ENCODE measurements at regions of chr12 and their contacts with region 1.

Region 1: GRCh38 chr12:14167005-14167628 is 185.7 kb upstream of the GRIN2B start:
- DNase-seq: peak; percentile 59
- H3K4me3 Mint-ChIP-seq: no peak overlapping the region
- H3K27ac Mint-ChIP-seq: no peak overlapping the region
- H3K4me1 Mint-ChIP-seq: no peaks in the 10 kb centered on the region
- H3K27me3 Mint-ChIP-seq: peaks cover 4% of the 10 kb centered on the region

Region 2: GRCh38 chr12:13278249-13278787 is 888.8 kb before region 1 on chr12:
- CTCF ChIA-PET with region 1: interaction called, 6 read pairs
- intact Hi-C with region 1: loop called (anchors 2 kb)
- DNase-seq: peak; percentile 67
- H3K4me3 Mint-ChIP-seq: no peak overlapping the region
- H3K27ac Mint-ChIP-seq: no peak overlapping the region
- H3K4me1 Mint-ChIP-seq: peaks cover 3% of the 10 kb centered on the region
- H3K27me3 Mint-ChIP-seq: peaks cover 27% of the 10 kb centered on the region

Region 3: DNA sequence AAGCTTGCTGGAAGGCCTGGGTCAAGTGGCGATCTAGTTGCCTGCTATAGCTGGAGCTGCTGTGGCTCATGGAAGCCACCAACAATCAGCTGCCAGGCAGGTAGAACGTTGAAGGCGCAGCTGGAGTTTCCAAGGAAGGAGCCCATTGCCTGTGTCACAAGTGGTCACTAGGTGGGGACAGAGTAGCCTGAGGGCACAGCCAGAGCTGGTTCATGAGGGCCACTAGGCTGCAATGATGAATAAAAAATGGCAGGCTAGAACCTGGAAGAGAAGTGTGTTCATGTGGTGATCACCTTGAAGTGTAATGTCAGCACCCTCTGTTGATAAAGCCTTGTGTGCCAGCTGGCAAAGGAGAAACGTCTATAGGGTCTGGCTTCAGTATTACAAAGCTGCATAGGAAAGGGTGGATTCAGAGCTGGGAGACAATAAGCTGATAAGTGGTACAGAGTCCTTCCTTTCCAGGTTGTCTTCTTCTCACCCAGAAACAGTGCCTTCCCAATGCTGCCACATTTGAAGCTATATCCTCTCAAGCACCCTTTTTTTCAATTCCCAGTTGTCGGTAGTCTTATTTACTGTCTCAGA is 804.8 kb before region 1 on chr12:
- CTCF ChIA-PET with region 1: interaction called, 6 read pairs
- intact Hi-C with region 1: loop called (anchors 1 kb)
- DNase-seq: peak; percentile 75
- H3K4me3 Mint-ChIP-seq: no peak overlapping the region
- H3K27ac Mint-ChIP-seq: no peak overlapping the region
- H3K4me1 Mint-ChIP-seq: no peaks in the 10 kb centered on the region
- H3K27me3 Mint-ChIP-seq: peaks cover 15% of the 10 kb centered on the region

Region 4: GRCh38 chr12:13436696-13437391 is 730.3 kb before region 1 on chr12:
- CTCF ChIA-PET with region 1: no interaction called
- intact Hi-C with region 1: no loop called
- DNase-seq: no peak
- H3K4me3 Mint-ChIP-seq: no peak overlapping the region
- H3K27ac Mint-ChIP-seq: no peak overlapping the region
- H3K4me1 Mint-ChIP-seq: no peaks in the 10 kb centered on the region
- H3K27me3 Mint-ChIP-seq: no peaks in the 10 kb centered on the region

Region 5: DNA sequence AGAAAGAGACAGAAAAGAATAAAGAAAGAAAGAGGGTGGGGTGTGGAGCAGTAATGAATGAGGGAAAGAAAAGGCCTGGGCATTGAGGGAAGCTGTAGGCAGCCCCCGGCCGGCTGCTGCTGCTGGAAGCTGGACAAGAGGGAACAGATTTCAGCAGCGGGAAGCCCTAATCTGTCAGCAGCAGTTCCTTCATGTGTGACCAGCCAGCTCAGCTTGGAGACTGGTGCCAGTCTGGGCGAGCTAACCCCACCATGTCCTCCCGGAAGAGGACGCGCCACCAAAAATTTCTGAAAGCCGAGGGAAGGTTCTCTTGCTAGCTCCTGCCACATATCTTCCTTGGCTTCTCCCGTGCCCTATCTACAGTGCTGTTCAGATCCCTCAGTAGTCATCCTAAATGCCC is 422.6 kb before region 1 on chr12:
- CTCF ChIA-PET with region 1: interaction called, 4 read pairs
- intact Hi-C with region 1: loop called (anchors 2 kb)
- DNase-seq: no peak
- H3K4me3 Mint-ChIP-seq: no peak overlapping the region
- H3K27ac Mint-ChIP-seq: no peak overlapping the region
- H3K4me1 Mint-ChIP-seq: peaks cover 3% of the 10 kb centered on the region
- H3K27me3 Mint-ChIP-seq: peaks cover 19% of the 10 kb centered on the region

Region 6: DNA sequence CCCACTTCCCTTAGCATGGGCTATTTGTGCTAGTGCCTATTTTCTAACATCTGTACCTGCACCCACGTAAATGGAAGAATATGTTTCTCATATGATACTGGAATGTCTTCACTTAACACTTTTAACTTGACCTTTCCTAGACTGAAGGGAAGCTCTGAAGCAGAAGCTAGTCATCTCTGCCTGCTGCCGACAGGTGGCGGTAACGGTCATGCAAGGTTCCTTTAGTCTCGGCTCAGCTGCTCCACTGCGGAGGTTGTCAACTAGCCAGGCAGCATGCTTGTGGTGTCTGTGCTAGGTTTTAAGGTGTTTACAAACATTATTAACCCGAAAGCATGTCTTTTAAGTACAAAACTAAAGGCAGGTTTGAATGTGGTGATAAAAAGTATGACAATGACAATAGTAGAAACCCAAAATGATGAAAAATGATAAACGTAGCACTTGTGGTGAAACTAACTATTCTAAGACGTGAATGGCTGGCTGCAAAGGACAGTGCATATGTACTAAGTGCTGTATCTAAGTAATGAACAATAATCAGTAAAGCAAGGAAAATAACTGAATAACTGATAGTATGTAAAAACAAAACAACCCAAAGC is 302.9 kb before region 1 on chr12:
- CTCF ChIA-PET with region 1: interaction called, 14 read pairs
- intact Hi-C with region 1: loop called (anchors 1 kb)
- DNase-seq: peak; percentile 75
- H3K4me3 Mint-ChIP-seq: no peak overlapping the region
- H3K27ac Mint-ChIP-seq: no peak overlapping the region
- H3K4me1 Mint-ChIP-seq: no peaks in the 10 kb centered on the region
- H3K27me3 Mint-ChIP-seq: peaks cover 20% of the 10 kb centered on the region

Region 7: GRCh38 chr12:14185427-14186192 is 18.5 kb after region 1 on chr12:
- CTCF ChIA-PET with region 1: interaction called, 10 read pairs
- intact Hi-C with region 1: no loop called
- DNase-seq: peak; percentile 47
- H3K4me3 Mint-ChIP-seq: no peak overlapping the region
- H3K27ac Mint-ChIP-seq: no peak overlapping the region
- H3K4me1 Mint-ChIP-seq: peaks cover 2% of the 10 kb centered on the region
- H3K27me3 Mint-ChIP-seq: peaks cover 5% of the 10 kb centered on the region

Region 8: GRCh38 chr12:14408208-14408607 is 241.1 kb after region 1 on chr12:
- CTCF ChIA-PET with region 1: no interaction called
- intact Hi-C with region 1: no loop called
- DNase-seq: no peak
- H3K4me3 Mint-ChIP-seq: no peak overlapping the region
- H3K27ac Mint-ChIP-seq: peak overlapping the region; percentile 59
- H3K4me1 Mint-ChIP-seq: peaks cover 70% of the 10 kb centered on the region
- H3K27me3 Mint-ChIP-seq: no peaks in the 10 kb centered on the region

Measured in activated naive CD4-positive, alpha-beta T cell treated with anti-CD3 and anti-CD28 coated beads for 36 hours (primary cell).